ENCODE measurements at regions of chr7 and their contacts with region 1.

Region 1: DNA sequence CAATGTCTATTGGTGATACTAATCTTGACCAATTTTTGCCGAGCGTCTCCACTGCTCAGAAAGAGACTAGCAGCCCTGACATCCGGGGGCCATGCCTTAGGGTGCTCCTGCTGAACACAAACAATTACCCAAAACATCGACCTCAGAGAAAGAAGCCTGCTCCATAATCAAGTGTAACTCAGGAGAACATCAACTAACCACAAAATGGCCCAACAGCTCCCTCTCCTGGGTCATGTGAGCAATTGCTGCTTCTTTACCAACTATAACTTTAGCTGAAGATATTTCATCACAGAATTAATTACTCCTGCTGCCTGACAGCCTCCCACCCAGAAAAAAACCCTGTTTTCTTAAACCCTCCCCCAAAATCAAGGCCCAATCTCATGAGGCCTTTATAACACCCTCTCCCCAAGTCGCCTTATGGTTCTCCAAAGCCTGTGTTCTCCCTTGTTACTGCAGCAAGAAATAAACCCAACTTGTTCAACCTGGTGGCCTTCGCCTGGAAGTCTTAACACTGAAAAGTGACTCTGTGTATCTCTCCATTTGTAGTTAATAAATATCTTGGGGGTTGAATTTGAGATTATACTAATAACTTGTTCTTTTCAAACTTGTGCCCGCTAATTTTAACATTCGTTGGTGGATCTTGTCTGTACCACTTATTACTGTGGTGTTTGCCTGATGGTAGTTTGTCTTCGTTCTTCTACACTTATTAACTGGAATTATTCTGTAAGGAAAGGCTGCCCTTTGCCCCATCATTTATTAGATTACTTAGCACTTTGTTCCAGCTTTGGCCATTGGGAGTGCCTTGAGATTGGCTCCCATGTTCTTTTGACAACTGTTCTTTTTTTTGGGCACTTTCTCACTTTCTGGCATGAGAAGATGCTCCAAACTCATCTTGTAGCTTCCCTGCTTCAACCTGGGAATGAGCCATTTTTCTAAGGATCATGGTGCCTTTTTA is 21.2 kb upstream of the RAMP3 start:
- DNase-seq: peak; percentile 77
- ATAC-seq: peak; percentile 95
- H3K4me3 Mint-ChIP-seq: no peak overlapping the region
- H3K27ac Mint-ChIP-seq: peak overlapping the region; percentile 59
- H3K4me1 Mint-ChIP-seq: peaks cover 9% of the 10 kb centered on the region
- H3K27me3 Mint-ChIP-seq: no peaks in the 10 kb centered on the region
- CTCF ChIP-seq: peak; percentile 91

Region 2: GRCh38 chr7:44847508-44847920 is 288.9 kb before region 1 on chr7:
- CTCF ChIA-PET with region 1: interaction called, 13 read pairs
- POLR2A ChIA-PET with region 1: no interaction called
- intact Hi-C with region 1: no loop called
- DNase-seq: peak; percentile 88
- ATAC-seq: peak; percentile 69
- H3K4me3 Mint-ChIP-seq: peak overlapping the region; percentile 92
- H3K27ac Mint-ChIP-seq: peak overlapping the region; percentile 100
- H3K4me1 Mint-ChIP-seq: peaks cover 36% of the 10 kb centered on the region
- H3K27me3 Mint-ChIP-seq: no peaks in the 10 kb centered on the region
- CTCF ChIP-seq: peak; percentile 85

Region 3: DNA sequence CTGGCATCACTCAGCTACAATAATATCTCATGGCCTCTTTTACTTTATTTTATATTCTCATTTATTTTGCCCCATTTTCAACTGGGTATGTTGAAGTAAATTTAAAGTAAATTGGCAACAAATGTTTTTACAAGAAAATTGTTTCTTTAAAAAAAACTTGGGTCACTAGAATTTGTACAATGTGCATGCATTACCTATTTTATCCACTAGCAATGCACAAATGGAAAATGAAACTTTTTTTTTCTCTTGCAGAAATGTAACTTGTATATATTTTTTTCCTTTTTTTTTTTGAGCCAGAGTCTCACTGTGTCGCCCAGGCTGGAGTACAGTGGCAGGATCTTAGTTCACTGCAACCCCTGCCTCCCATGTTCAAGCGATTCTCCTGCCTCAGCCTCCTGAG is 278.2 kb before region 1 on chr7:
- CTCF ChIA-PET with region 1: interaction called, 40 read pairs
- POLR2A ChIA-PET with region 1: no interaction called
- intact Hi-C with region 1: loop called (anchors 1 kb)
- DNase-seq: no peak
- ATAC-seq: no peak
- H3K4me3 Mint-ChIP-seq: no peak overlapping the region
- H3K27ac Mint-ChIP-seq: no peak overlapping the region
- H3K4me1 Mint-ChIP-seq: peaks cover 21% of the 10 kb centered on the region
- H3K27me3 Mint-ChIP-seq: peaks cover 3% of the 10 kb centered on the region
- CTCF ChIP-seq: peak; percentile 57

Region 4: GRCh38 chr7:44980393-44981034 is 155.9 kb before region 1 on chr7:
- CTCF ChIA-PET with region 1: interaction called, 87 read pairs
- POLR2A ChIA-PET with region 1: interaction called, 7 read pairs
- intact Hi-C with region 1: no loop called
- DNase-seq: peak; percentile 97
- ATAC-seq: peak; percentile 52
- H3K4me3 Mint-ChIP-seq: peak overlapping the region; percentile 100
- H3K27ac Mint-ChIP-seq: peak overlapping the region; percentile 100
- H3K4me1 Mint-ChIP-seq: peaks cover 60% of the 10 kb centered on the region
- H3K27me3 Mint-ChIP-seq: no peaks in the 10 kb centered on the region
- CTCF ChIP-seq: no peak

Region 5: GRCh38 chr7:45098983-45099839 is 37.2 kb before region 1 on chr7:
- CTCF ChIA-PET with region 1: no interaction called
- POLR2A ChIA-PET with region 1: no interaction called
- intact Hi-C with region 1: no loop called
- DNase-seq: no peak
- ATAC-seq: peak; percentile 47
- H3K4me3 Mint-ChIP-seq: no peak overlapping the region
- H3K27ac Mint-ChIP-seq: no peak overlapping the region
- H3K4me1 Mint-ChIP-seq: no peaks in the 10 kb centered on the region
- H3K27me3 Mint-ChIP-seq: no peaks in the 10 kb centered on the region
- CTCF ChIP-seq: no peak

Region 6: GRCh38 chr7:45111298-45112223 is 24.8 kb before region 1 on chr7 and contains the start of gene TBRG4:
- CTCF ChIA-PET with region 1: interaction called, 17 read pairs
- POLR2A ChIA-PET with region 1: interaction called, 9 read pairs
- intact Hi-C with region 1: no loop called
- DNase-seq: peak; percentile 97
- ATAC-seq: peak; percentile 94
- H3K4me3 Mint-ChIP-seq: peak within 1 kb of the TSS; percentile 90
- H3K27ac Mint-ChIP-seq: peak within 1 kb of the TSS; percentile 95
- H3K4me1 Mint-ChIP-seq: peaks cover 32% of the 10 kb centered on the region
- H3K27me3 Mint-ChIP-seq: no peaks in the 10 kb centered on the region
- CTCF ChIP-seq: no peak
- total RNA-seq, gene TBRG4: 197 TPM

Region 7: DNA sequence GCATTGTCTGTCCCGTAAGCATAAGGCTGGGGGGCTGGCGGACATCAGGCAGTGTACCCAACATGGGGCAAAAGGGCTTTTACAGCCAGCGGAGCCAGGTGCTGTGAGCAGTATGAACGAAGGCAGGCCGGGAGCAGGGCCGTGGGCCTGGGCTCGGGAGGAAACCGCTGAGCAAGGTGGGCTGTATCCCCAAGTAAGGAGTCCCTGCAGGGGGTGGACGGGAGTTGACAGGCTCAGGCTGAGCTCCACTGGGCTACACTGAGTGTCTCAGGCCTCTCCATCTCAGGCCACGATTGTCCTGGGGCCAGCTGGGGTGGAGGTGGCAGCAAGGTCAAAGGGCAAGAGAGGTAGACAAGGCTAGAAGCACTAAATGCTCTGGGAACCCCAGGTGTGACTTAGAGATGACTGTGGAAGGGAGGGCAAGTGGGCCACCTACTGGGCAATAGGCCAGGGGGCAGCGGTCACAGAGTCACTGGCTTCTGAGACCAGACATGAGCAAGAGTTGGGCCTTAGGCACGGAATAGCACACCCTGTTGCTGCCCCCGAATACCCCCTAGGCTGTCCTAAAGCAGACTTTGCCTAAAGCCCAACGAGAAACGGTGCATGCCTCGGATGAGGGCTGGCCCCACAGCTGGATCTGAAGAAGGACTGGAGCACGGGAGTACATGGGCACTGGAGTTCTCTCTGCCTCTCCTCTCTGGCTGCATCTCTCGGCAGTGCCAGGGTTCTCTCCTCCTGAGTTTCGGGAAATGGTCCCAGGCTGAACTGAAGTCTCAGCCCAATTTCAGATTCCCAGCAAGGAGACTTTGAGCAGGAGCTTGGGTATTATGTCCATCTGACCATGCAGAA is 10.4 kb after region 1 on chr7:
- CTCF ChIA-PET with region 1: interaction called, 10 read pairs
- POLR2A ChIA-PET with region 1: no interaction called
- intact Hi-C with region 1: no loop called
- DNase-seq: no peak
- ATAC-seq: no peak
- H3K4me3 Mint-ChIP-seq: no peak overlapping the region
- H3K27ac Mint-ChIP-seq: no peak overlapping the region
- H3K4me1 Mint-ChIP-seq: no peaks in the 10 kb centered on the region
- H3K27me3 Mint-ChIP-seq: peaks cover 6% of the 10 kb centered on the region
- CTCF ChIP-seq: no peak

Region 8: DNA sequence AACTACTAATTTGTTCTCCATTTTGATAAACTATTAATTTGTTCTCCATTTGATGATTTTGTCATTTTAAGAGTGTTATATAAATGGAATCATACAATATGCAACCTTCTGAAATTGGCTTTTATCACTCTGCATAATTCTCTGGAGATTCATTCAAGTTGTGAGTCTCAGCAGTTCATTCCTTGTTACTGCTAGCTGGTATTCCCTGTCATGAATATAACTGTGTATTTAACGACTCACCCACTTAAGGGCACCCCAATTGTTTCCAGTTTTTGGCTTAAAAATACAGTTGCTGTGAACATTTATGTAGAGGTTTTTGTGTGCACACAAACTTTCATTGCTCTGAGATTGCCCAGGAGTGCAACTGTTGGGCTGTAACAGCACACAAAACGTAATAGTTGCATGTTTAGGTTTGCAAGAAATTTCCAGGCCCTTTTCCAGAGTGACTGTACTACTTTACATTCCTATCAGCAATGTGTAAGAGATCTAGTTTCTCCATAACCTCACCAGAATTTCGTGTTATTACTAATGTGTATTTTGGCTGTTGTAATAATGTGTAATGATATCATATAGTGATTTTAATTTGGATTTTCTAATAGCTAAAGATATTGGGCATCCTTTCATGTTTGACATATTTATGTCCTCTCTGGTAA is 284.6 kb after region 1 on chr7:
- CTCF ChIA-PET with region 1: no interaction called
- POLR2A ChIA-PET with region 1: no interaction called
- intact Hi-C with region 1: no loop called
- DNase-seq: no peak
- ATAC-seq: no peak
- H3K4me3 Mint-ChIP-seq: no peak overlapping the region
- H3K27ac Mint-ChIP-seq: no peak overlapping the region
- H3K4me1 Mint-ChIP-seq: no peaks in the 10 kb centered on the region
- H3K27me3 Mint-ChIP-seq: peaks cover 16% of the 10 kb centered on the region
- CTCF ChIP-seq: no peak

Measured in activated CD8-positive, alpha-beta T cell treated with anti-CD3 and anti-CD28 coated beads for 36 hours (primary cell).